Left cardiac atrium (tissue), 4 donors: ENCODE measurements at regions of chr12 and their contacts with region 1.

Region 1: GRCh38 chr12:1083889-1084262 is 92.9 kb downstream of the ERC1 start:
- DNase-seq: no peak
- ATAC-seq: peak; percentile 45 to 76

Region 2: DNA sequence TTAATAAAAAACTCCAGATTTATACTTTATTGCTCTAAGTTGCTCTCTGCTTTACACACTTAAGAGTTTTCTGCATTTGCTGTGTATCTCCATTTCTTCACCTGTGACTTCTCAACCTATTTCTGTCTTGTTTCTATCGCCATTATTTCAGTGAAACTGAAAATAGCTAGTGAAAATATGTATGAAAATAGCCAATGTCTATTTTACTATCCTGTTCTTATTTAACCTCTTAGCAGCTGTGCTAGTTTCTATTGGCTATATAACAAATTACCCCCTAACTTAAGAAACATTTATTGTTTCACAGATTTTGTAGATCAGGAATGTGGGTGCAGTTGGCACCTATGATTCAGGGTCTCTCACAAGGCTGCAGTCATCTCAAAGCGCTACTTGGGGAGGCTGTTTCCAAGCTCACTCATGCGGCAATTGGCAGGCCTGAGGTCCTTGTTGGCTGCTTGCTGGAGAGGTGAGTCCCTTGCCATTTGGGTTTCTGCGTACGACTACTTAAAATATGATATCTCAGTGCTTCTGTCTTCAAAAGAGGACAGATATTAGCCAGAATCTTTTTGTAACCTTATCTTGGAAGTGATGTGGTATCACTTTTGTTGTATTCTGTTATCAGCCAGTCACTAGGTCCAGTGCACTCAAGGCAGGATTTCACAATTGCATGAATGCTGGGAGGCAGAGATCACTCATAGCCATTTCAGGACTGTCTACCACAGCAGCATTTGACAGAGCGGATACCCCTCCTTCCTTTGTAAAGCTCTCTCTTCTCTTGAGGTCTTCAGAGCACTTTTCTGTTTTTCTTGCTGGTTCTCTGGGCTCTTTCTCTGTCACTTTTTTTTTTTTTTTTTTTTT is 85.6 kb before region 1 on chr12:
- intact Hi-C with region 1: loop called in 1 of 2 experiments (anchors 5 kb)
- DNase-seq: no peak
- ATAC-seq: peak; percentile 67 to 71

Region 3: GRCh38 chr12:1044696-1045095 is 39.2 kb before region 1 on chr12:
- intact Hi-C with region 1: no loop called
- DNase-seq: no peak
- ATAC-seq: no peak